Dendritic cell treated with granulocyte-macrophage colony-stimulating factor and Interleukin-4, amounts not matched to agents 40 ng/mL and 50 ng/mL, for 4 days (primary cell): ENCODE measurements at regions of chr17 and their contacts with region 1.

Region 1: GRCh38 chr17:43694077-43694870 is 32.6 kb upstream of the MEOX1 start:
- H3K4me3 Mint-ChIP-seq: no peak overlapping the region
- H3K27ac Mint-ChIP-seq: no peak overlapping the region
- H3K4me1 Mint-ChIP-seq: peaks cover 7% of the 10 kb centered on the region
- H3K27me3 Mint-ChIP-seq: peaks cover 31% of the 10 kb centered on the region

Region 2: GRCh38 chr17:43316522-43317142 is 377.6 kb before region 1 on chr17:
- intact Hi-C with region 1: no loop called
- H3K4me3 Mint-ChIP-seq: no peak overlapping the region
- H3K27ac Mint-ChIP-seq: no peak overlapping the region
- H3K4me1 Mint-ChIP-seq: peaks cover 30% of the 10 kb centered on the region
- H3K27me3 Mint-ChIP-seq: peaks cover 4% of the 10 kb centered on the region

Region 3: DNA sequence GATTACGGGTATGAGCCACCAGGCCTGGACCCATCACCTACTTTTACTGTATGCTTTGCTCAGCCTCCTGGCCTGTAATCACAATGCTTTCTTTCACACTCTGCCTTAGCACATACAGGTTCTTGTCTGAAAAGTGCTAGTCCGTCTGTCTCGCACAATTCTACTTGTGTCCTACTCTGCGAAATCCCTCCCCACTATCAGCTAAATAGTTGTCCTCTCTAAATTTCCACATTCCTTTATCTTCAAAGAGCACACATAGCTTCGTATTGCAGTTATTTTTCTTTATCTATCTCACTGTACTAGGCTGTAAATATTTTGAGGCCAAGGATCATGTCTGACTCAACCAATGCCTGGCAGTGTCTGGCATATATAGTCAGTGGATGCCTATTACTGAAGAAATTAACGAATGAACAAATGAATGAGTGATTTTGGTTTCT is 109.6 kb before region 1 on chr17:
- intact Hi-C with region 1: no loop called
- H3K4me3 Mint-ChIP-seq: no peak overlapping the region
- H3K27ac Mint-ChIP-seq: no peak overlapping the region
- H3K4me1 Mint-ChIP-seq: peaks cover 6% of the 10 kb centered on the region
- H3K27me3 Mint-ChIP-seq: peaks cover 23% of the 10 kb centered on the region

Region 4: DNA sequence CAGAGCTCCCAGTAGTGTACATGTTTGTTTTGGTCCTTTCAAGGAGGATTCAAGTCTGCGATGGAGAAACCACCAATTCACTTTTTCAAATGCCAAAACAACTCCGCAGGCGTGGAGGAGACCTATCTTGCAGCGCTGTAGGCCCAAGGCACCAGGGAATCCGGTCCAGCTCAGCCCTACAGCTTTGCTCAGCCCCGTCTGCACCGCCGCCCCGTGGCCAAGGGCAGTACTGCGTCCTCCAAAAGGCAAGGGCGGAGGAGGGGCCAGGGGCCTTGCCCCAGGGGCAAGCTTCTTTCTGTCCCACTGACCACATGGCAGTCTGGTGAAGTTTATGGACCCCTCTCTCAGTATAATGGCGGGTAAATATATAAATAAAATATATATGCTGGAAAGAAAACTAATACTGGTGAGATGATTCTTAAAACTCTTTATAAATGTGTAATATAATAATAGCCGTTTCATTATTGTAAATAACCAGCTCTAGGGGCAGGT is 152.0 kb after region 1 on chr17:
- intact Hi-C with region 1: loop called (anchors 1 kb)
- H3K4me3 Mint-ChIP-seq: no peak overlapping the region
- H3K27ac Mint-ChIP-seq: peak overlapping the region; percentile 37
- H3K4me1 Mint-ChIP-seq: peaks cover 33% of the 10 kb centered on the region
- H3K27me3 Mint-ChIP-seq: peaks cover 29% of the 10 kb centered on the region